Activated CD4-positive, alpha-beta memory T cell treated with anti-CD3 and anti-CD28 coated beads for 36 hours (primary cell): ENCODE measurements at regions of chr11 and their contacts with region 1.

Region 1: DNA sequence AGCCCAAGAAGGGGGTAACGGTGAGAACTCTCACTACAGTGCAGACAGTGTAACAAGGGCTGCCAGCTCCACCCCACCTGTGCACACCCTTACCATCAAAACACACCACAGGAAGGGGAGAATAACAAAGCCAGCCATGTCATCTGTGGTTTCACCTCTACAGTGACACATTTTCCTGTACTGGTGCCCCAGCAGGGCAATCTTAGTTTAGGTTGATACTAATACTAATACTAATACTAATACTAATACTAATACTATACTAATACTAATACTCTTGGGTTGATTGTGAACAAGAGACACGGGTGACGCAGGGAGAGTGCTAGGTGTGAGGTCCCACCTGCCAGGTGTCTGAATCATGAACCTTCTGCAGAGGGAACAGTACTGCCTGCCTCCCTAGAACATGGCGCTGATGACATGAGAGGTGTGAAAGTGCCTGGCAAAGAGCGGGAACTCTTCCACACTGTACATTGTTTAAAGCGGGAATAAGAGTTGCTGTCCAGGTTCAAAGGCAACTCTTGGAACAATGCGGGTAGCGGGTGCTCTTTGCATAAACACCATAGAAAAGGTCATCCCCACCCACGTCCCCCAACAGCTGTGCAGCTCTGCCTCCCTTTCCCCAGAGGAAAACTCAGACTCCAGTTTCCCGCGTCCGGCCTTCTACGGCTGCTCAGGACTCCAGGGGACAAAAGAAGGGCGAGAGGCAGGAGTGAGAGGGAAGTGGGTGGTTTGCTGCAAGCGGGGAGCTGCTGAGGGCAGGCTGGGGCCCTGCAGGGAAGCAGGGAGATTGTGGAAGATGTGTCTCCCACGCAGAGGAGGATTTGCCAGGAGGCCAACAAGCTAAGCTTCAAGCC is 25.0 kb upstream of the TMPRSS4 start:
- DNase-seq: peak; percentile 82
- H3K4me3 Mint-ChIP-seq: peak overlapping the region; percentile 41
- H3K27ac Mint-ChIP-seq: peak overlapping the region; percentile 84
- H3K4me1 Mint-ChIP-seq: peaks cover 56% of the 10 kb centered on the region
- H3K27me3 Mint-ChIP-seq: no peaks in the 10 kb centered on the region

Region 2: GRCh38 chr11:117817368-117818040 is 234.3 kb before region 1 on chr11:
- CTCF ChIA-PET with region 1: interaction called, 86 read pairs
- POLR2A ChIA-PET with region 1: interaction called, 7 read pairs
- intact Hi-C with region 1: loop called (anchors 2 kb)
- DNase-seq: peak; percentile 96
- H3K4me3 Mint-ChIP-seq: peak overlapping the region; percentile 42
- H3K27ac Mint-ChIP-seq: peak overlapping the region; percentile 94
- H3K4me1 Mint-ChIP-seq: peaks cover 62% of the 10 kb centered on the region
- H3K27me3 Mint-ChIP-seq: no peaks in the 10 kb centered on the region

Region 3: DNA sequence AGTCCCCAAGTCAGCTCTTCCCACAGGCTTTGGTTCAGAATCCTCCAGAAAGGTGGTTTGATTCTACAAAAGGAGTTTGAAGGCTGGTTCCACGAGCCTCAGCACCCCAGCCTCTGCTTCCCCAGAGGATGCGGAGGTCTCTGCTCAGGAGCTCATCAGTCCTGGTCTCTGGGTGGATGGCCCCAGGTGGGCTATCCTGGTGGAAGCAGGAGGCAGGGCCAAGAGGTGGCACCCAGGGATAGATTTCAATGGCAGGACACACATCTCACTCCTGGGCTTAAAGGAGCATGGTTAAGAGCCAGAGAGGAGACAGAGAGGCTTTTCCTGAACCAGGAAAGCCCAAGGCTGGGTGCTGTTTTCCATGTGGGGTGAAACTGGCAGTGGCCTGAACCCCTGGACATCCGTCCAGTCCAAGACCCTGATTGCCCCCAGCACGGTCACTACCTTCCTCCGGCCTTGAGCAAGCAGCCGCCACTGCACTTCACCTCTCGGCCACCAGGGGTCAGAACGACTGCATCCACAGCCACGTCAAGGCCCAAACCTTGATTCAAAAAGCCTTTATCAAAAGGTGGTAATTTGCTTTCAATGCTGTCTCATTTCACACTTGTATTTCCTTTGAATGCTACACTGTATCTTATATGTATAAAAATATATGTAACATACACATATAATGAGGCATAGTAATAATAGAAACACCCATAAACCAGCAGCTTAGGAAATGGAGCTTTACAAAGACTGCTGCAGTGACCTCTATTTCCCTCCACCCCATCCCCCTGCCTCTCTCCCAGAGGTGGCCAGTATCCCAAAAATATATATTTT is 208.0 kb before region 1 on chr11:
- CTCF ChIA-PET with region 1: interaction called, 154 read pairs
- POLR2A ChIA-PET with region 1: no interaction called
- intact Hi-C with region 1: loop called (anchors 1 kb)
- DNase-seq: peak; percentile 90
- H3K4me3 Mint-ChIP-seq: no peak overlapping the region
- H3K27ac Mint-ChIP-seq: no peak overlapping the region
- H3K4me1 Mint-ChIP-seq: no peaks in the 10 kb centered on the region
- H3K27me3 Mint-ChIP-seq: no peaks in the 10 kb centered on the region

Region 4: GRCh38 chr11:117932067-117932370 is 119.8 kb before region 1 on chr11:
- CTCF ChIA-PET with region 1: interaction called, 15 read pairs
- POLR2A ChIA-PET with region 1: no interaction called
- intact Hi-C with region 1: loop called (anchors 5 kb)
- DNase-seq: peak; percentile 85
- H3K4me3 Mint-ChIP-seq: no peak overlapping the region
- H3K27ac Mint-ChIP-seq: peak overlapping the region; percentile 51
- H3K4me1 Mint-ChIP-seq: peaks cover 54% of the 10 kb centered on the region
- H3K27me3 Mint-ChIP-seq: no peaks in the 10 kb centered on the region

Region 5: GRCh38 chr11:117979481-117980211 is 72.2 kb before region 1 on chr11:
- CTCF ChIA-PET with region 1: interaction called, 82 read pairs
- POLR2A ChIA-PET with region 1: interaction called, 4 read pairs
- intact Hi-C with region 1: no loop called
- DNase-seq: peak; percentile 63
- H3K4me3 Mint-ChIP-seq: peak overlapping the region; percentile 2
- H3K27ac Mint-ChIP-seq: peak overlapping the region; percentile 85
- H3K4me1 Mint-ChIP-seq: peaks cover 80% of the 10 kb centered on the region
- H3K27me3 Mint-ChIP-seq: no peaks in the 10 kb centered on the region

Region 6: GRCh38 chr11:118114266-118114665 is 62.4 kb after region 1 on chr11:
- CTCF ChIA-PET with region 1: no interaction called
- POLR2A ChIA-PET with region 1: no interaction called
- intact Hi-C with region 1: no loop called
- DNase-seq: no peak
- H3K4me3 Mint-ChIP-seq: no peak overlapping the region
- H3K27ac Mint-ChIP-seq: no peak overlapping the region
- H3K4me1 Mint-ChIP-seq: no peaks in the 10 kb centered on the region
- H3K27me3 Mint-ChIP-seq: peaks cover 2% of the 10 kb centered on the region

Region 7: GRCh38 chr11:118240999-118241768 is 189.3 kb after region 1 on chr11:
- CTCF ChIA-PET with region 1: no interaction called
- POLR2A ChIA-PET with region 1: no interaction called
- intact Hi-C with region 1: loop called (anchors 5 kb)
- DNase-seq: peak; percentile 84
- H3K4me3 Mint-ChIP-seq: peak overlapping the region; percentile 78
- H3K27ac Mint-ChIP-seq: peak overlapping the region; percentile 96
- H3K4me1 Mint-ChIP-seq: peaks cover 88% of the 10 kb centered on the region
- H3K27me3 Mint-ChIP-seq: no peaks in the 10 kb centered on the region